ENCODE measurements at regions of chr7 and their contacts with region 1.

Region 1: GRCh38 chr7:6558837-6559236 is 7.6 kb upstream of the GRID2IP start:
- DNase-seq: peak; percentile 88
- H3K4me3 ChIP-seq: no peak overlapping the region
- H3K27ac ChIP-seq: no peak overlapping the region
- H3K4me1 ChIP-seq: no peaks in the 10 kb centered on the region
- H3K27me3 ChIP-seq: peaks cover 2% of the 10 kb centered on the region; the same call in 1 of the 2 replicates
- CTCF ChIP-seq: peak; percentile 65
- EP300 ChIP-seq: no peak
- RAD21 ChIP-seq: peak; percentile 89

Region 2: GRCh38 chr7:6350433-6351058 is 208.3 kb before region 1 on chr7:
- CTCF ChIA-PET with region 1: no interaction called
- POLR2A ChIA-PET with region 1: no interaction called
- DNase-seq: no peak
- H3K4me3 ChIP-seq: no peak overlapping the region
- H3K27ac ChIP-seq: no peak overlapping the region
- H3K4me1 ChIP-seq: no peaks in the 10 kb centered on the region; a peak in 1 of 4 replicates
- H3K27me3 ChIP-seq: no peaks in the 10 kb centered on the region
- CTCF ChIP-seq: no peak
- EP300 ChIP-seq: no peak
- RAD21 ChIP-seq: no peak

Region 3: DNA sequence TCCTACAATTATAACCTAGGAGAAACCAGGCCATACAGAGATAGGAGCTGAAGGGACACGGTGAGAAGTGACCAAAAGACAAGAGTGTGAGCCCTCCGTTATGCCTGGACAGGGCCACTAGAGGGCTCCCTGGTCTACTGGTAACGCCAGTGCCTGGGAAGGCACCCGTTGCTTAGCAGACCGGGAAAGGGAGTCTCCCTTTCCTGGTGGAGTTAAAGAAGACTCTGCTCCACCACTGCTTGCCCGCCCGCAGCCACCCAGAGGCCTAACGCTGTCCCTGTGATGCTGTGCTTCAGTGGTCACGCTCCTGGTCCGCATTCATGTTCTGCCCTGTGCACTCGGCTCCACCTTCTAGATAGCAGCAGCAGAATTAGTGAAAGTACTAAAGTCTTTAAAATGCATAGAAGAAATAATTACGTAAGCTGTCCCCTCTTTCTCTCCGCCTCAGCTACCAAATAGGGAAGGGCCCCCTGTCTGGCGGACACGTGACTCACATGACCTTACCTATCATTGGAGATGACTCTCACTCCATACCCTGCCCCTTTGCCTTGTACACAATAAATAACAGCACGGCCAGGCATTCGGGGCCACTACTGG is 42.4 kb before region 1 on chr7:
- CTCF ChIA-PET with region 1: interaction called, 76 read pairs
- POLR2A ChIA-PET with region 1: interaction called, 4 read pairs
- DNase-seq: peak; percentile 85
- H3K4me3 ChIP-seq: peak overlapping the region in 1 of 2 experiments; percentile 42; a peak in 2 of 4 replicates
- H3K27ac ChIP-seq: no peak overlapping the region
- H3K4me1 ChIP-seq: peaks cover 0 to 3% of the 10 kb centered on the region in 2 experiments; a peak in 1 of 4 replicates
- H3K27me3 ChIP-seq: peaks cover 6% of the 10 kb centered on the region; the same call in 1 of the 2 replicates
- CTCF ChIP-seq: peak; percentile 89
- EP300 ChIP-seq: no peak
- RAD21 ChIP-seq: peak; percentile 87

Region 4: GRCh38 chr7:6536262-6537260 is 22.3 kb before region 1 on chr7:
- CTCF ChIA-PET with region 1: interaction called, 27 read pairs
- POLR2A ChIA-PET with region 1: no interaction called
- DNase-seq: peak; percentile 100
- H3K4me3 ChIP-seq: peak overlapping the region; percentile 43 to 62
- H3K27ac ChIP-seq: no peak overlapping the region
- H3K4me1 ChIP-seq: no peaks in the 10 kb centered on the region; a peak in 1 of 4 replicates
- H3K27me3 ChIP-seq: peaks cover 10% of the 10 kb centered on the region; the same call in 1 of the 2 replicates
- CTCF ChIP-seq: no peak
- EP300 ChIP-seq: no peak
- RAD21 ChIP-seq: no peak

Region 5: GRCh38 chr7:6545398-6546126 is 13.3 kb before region 1 on chr7:
- CTCF ChIA-PET with region 1: interaction called, 20 read pairs
- POLR2A ChIA-PET with region 1: no interaction called
- DNase-seq: no peak
- H3K4me3 ChIP-seq: no peak overlapping the region
- H3K27ac ChIP-seq: no peak overlapping the region
- H3K4me1 ChIP-seq: no peaks in the 10 kb centered on the region
- H3K27me3 ChIP-seq: no peaks in the 10 kb centered on the region
- CTCF ChIP-seq: no peak
- EP300 ChIP-seq: no peak
- RAD21 ChIP-seq: no peak

Region 6: DNA sequence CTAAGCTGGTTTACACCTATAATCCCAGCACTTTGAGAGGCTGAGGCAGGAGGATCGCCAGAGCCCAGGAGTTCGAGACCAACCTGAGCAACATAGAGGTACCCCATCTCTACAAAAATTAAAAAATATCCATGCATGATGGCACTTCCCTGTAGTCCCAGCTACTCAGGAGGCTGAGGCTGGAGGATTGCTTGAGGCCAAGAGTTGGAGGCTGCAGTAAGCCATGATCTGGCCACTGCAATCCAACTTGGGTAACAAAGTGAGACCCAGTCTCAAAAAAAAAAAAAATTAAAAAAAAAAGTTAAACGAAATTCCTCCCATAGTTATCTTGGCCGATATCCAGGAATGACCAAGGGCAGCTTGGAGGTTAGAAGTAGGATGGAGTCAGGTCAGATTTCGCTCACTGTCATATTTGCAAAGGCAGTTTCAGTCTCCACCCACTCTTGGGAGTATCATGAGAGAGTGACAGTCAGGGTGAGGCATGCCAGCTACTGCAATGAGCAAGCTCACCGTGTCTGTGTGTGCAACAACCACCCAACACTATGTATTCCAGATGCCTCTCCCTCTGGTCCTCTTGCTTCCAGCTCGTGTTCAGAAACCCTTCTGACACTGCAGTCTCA is 12.4 kb after region 1 on chr7:
- CTCF ChIA-PET with region 1: interaction called, 24 read pairs
- POLR2A ChIA-PET with region 1: interaction called, 3 read pairs
- DNase-seq: no peak
- H3K4me3 ChIP-seq: no peak overlapping the region
- H3K27ac ChIP-seq: no peak overlapping the region
- H3K4me1 ChIP-seq: peaks cover 0 to 3% of the 10 kb centered on the region in 2 experiments; a peak in 1 of 4 replicates
- H3K27me3 ChIP-seq: peaks cover 7% of the 10 kb centered on the region; the same call in 1 of the 2 replicates
- CTCF ChIP-seq: no peak
- EP300 ChIP-seq: no peak
- RAD21 ChIP-seq: no peak

Region 7: GRCh38 chr7:6640246-6640721 is 81.4 kb after region 1 on chr7:
- CTCF ChIA-PET with region 1: no interaction called
- POLR2A ChIA-PET with region 1: no interaction called
- DNase-seq: no peak
- H3K4me3 ChIP-seq: no peak overlapping the region
- H3K27ac ChIP-seq: no peak overlapping the region
- H3K4me1 ChIP-seq: peaks cover 5 to 15% of the 10 kb centered on the region in 2 experiments; a peak in 2 of 4 replicates
- H3K27me3 ChIP-seq: no peaks in the 10 kb centered on the region
- CTCF ChIP-seq: no peak
- EP300 ChIP-seq: no peak
- RAD21 ChIP-seq: no peak

Measured in SK-N-SH (cell line).